ENCODE measurements at regions of chr22 and their contacts with region 1.

Region 1: DNA sequence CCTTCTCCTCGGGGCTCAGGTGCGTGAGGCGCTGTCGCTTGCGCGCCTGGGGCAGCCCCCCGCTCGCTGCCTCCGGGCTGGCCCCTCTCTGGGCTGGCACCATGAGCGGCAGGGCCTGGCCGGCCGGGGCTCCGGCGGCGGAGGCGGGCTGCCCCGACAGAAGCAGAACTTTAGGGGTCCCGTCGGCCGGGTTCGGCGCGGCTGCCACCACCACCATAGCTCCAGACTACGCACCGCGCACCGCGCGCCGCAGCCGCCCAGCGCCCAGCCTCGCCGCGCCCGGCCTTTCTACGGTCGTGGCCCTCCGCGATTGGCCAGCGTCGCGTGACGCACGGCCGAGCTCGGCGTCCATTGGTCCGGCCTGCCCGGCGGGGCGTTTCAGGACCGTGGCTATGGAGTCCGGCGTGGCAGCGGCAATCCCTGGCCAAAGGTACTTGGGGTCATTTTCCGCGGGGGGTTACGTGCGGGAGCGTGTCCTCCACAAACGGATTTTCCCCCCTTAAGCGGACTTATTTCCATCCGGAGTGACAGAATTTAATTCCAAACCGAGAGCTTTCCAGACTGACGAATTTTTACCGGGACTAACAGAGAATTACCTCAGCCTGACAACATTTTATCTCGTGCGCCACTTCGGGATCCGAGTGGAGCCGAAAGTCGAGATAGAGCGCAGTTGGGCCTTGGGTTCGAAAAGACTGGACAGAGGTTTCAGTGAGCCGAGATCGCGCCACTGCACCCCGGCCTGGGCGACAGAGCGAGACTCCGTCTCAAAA is at the start of gene XBP1:
- DNase-seq: peak; percentile 66 to 96
- H3K4me3 ChIP-seq: peak within 1 kb of the TSS; percentile 78 to 97 (median 90)
- H3K27ac ChIP-seq: peak within 1 kb of the TSS; percentile 89
- H3K4me1 ChIP-seq: peaks cover 0 to 3% (median under 1%) of the 10 kb centered on the region in 4 experiments; a peak in 1 of 7 replicates
- H3K27me3 ChIP-seq: no peaks in the 10 kb centered on the region
- CTCF ChIP-seq: no peak
- EP300 ChIP-seq: no peak
- POLR2A ChIP-seq: peak; percentile 96 to 97
- RAD21 ChIP-seq: no peak
- total RNA-seq, gene XBP1: 128 and 131 TPM in 2 replicates

Region 2: DNA sequence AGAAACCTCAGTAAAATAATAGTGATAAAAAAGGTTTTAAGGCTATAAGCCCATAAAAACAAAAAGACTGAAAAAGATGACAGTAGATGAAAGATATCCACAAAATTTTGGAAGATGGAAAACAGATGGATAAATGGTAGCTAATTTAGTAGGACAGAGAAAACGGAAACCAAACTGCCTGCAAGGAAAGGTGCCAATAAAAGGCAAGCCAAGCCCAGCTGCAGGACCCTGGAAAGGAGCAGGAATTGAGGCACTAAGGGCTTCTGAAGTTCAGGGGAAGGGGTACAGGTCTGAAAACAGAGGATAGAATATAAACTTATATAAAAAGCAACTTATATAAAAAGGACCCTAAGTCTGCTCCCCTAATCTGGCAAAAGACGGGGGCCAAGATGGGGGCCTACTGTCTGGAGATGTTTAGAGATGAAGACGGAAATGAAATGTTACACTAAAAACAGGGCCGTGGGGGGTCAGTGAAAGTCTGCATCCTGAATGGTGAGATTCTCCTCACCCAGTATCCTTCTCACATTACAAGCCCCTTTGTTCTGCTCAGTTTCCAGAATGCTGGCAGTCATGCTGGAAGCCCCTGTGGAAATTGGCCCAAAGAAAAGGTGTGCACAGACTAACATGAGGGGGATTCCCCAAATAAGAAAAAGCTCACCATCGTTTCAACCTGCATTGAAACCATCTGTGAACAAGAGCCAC is 612.2 kb before region 1 on chr22:
- CTCF ChIA-PET with region 1: no interaction called
- POLR2A ChIA-PET with region 1: no interaction called
- DNase-seq: peak in 1 of 2 experiments; percentile 53
- H3K4me3 ChIP-seq: no peak overlapping the region
- H3K27ac ChIP-seq: no peak overlapping the region
- H3K4me1 ChIP-seq: peaks cover 0 to 7% (median 3%) of the 10 kb centered on the region in 4 experiments; a peak in 4 of 7 replicates
- H3K27me3 ChIP-seq: no peaks in the 10 kb centered on the region
- CTCF ChIP-seq: no peak
- EP300 ChIP-seq: no peak
- POLR2A ChIP-seq: no peak
- RAD21 ChIP-seq: no peak

Region 3: DNA sequence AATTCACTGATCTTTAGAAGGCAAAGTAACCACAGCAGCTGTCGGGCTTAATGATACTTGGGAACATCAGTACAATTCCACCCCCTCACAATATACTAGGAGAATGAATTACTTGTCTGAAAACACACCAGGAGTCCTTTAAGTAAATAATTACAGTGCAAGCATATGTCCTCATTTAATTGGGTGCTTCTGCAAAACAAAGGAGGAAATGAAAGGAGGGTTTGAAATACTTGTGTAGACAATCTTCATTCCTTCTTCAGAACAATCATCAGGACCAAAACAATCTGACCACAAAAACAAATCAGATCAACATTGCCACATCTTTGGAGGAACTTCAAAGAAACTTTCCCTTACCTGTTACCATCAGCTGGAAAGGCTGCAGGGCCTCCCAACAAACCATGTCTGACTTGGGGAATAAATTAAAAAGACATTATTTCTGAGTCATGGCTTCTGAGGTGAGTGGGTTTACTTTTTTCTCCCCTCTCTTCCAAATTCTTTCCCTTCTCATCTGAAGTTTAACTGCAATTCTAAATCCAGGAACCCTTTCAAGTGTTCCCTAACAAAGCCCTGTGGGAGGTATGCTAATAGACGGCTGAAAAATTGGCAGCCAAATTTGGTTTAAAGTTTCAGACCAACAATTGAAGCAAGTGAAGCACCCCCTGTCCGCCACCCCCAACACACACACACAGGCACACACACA is 40.5 kb before region 1 on chr22:
- CTCF ChIA-PET with region 1: no interaction called
- POLR2A ChIA-PET with region 1: interaction called, 28 read pairs
- DNase-seq: peak in 1 of 2 experiments; percentile 41
- H3K4me3 ChIP-seq: peak overlapping the region in 2 of 4 experiments; percentile 8 to 46; a peak in 3 of 8 replicates
- H3K27ac ChIP-seq: peak overlapping the region; percentile 93
- H3K4me1 ChIP-seq: peaks cover 0 to 10% (median 5%) of the 10 kb centered on the region in 4 experiments; a peak in 5 of 7 replicates
- H3K27me3 ChIP-seq: no peaks in the 10 kb centered on the region
- CTCF ChIP-seq: no peak
- EP300 ChIP-seq: no peak
- POLR2A ChIP-seq: peak in 1 of 2 experiments; percentile 43; a peak in 1 of 3 replicates
- RAD21 ChIP-seq: no peak

Region 4: GRCh38 chr22:28772633-28773460 is 27.6 kb before region 1 on chr22 and contains the start of gene CCDC117:
- CTCF ChIA-PET with region 1: no interaction called
- POLR2A ChIA-PET with region 1: interaction called, 25 read pairs
- DNase-seq: peak; percentile 89 to 92
- H3K4me3 ChIP-seq: peak within 1 kb of the TSS; percentile 71 to 77 (median 73)
- H3K27ac ChIP-seq: peak within 1 kb of the TSS; percentile 91; the same call in 1 of the 2 replicates
- H3K4me1 ChIP-seq: peaks cover 0 to 3% (median 0%) of the 10 kb centered on the region in 4 experiments; a peak in 2 of 7 replicates
- H3K27me3 ChIP-seq: no peaks in the 10 kb centered on the region
- CTCF ChIP-seq: peak in 2 of 3 experiments; percentile 8 to 43; a peak in 1 of 4 replicates
- EP300 ChIP-seq: no peak
- POLR2A ChIP-seq: peak in 1 of 2 experiments; percentile 82; a peak in 2 of 3 replicates
- RAD21 ChIP-seq: 0 out of 4 replicates have a peak, but pooled peaks of 1 of the 2 experiments have one; percentile 2
- total RNA-seq, gene CCDC117: 40.4 and 43.1 TPM in 2 replicates

Region 5: GRCh38 chr22:28783786-28784671 is 16.5 kb before region 1 on chr22:
- CTCF ChIA-PET with region 1: interaction called, 5 read pairs
- POLR2A ChIA-PET with region 1: interaction called, 100 read pairs
- DNase-seq: no peak
- H3K4me3 ChIP-seq: no peak overlapping the region
- H3K27ac ChIP-seq: no peak overlapping the region
- H3K4me1 ChIP-seq: no peaks in the 10 kb centered on the region
- H3K27me3 ChIP-seq: no peaks in the 10 kb centered on the region
- CTCF ChIP-seq: no peak
- EP300 ChIP-seq: no peak
- POLR2A ChIP-seq: no peak
- RAD21 ChIP-seq: no peak

Region 6: DNA sequence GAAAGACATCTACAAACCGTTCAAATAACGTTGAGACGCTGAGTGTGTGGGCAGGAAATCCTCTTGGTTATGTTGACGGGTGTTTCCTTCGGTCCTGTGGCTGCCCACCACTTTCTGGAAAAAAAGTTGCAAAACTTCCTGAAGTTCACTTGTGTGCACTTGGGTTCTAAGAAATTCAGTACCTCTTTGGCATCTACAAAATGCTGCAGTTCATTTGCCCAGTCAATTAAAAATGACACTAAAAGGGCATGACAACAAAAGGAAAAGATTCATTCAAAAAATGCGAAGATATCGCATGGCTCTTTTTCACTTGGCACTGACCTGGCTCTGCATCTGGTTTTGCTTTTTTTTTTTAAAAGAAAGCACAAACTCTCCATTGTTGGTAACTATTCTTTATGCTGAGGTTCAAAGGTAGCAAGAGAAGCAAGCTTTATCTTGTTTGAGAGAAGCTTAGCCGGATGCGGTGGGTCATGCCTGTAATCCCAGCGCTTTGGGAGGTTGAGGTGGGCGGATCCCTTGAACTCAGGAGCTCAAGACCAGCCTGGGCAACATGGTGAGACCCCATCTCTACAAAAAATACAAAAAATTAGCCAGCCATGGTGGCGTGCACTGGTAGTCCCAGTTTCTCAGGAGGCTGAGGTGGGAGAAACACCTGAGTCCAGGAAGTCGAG is 10.5 kb after region 1 on chr22:
- CTCF ChIA-PET with region 1: interaction called, 3 read pairs
- POLR2A ChIA-PET with region 1: interaction called, 25 read pairs
- DNase-seq: no peak
- H3K4me3 ChIP-seq: no peak overlapping the region
- H3K27ac ChIP-seq: no peak overlapping the region
- H3K4me1 ChIP-seq: no peaks in the 10 kb centered on the region; a peak in 1 of 7 replicates
- H3K27me3 ChIP-seq: no peaks in the 10 kb centered on the region
- CTCF ChIP-seq: no peak
- EP300 ChIP-seq: no peak
- POLR2A ChIP-seq: no peak
- RAD21 ChIP-seq: no peak

Region 7: GRCh38 chr22:28829358-28830181 is 29.1 kb after region 1 on chr22:
- CTCF ChIA-PET with region 1: interaction called, 12 read pairs
- POLR2A ChIA-PET with region 1: interaction called, 27 read pairs
- DNase-seq: peak; percentile 25 to 87
- H3K4me3 ChIP-seq: no peak overlapping the region
- H3K27ac ChIP-seq: no peak overlapping the region
- H3K4me1 ChIP-seq: no peaks in the 10 kb centered on the region; a peak in 1 of 7 replicates
- H3K27me3 ChIP-seq: no peaks in the 10 kb centered on the region
- CTCF ChIP-seq: peak; percentile 89 to 97 (median 93)
- EP300 ChIP-seq: no peak
- POLR2A ChIP-seq: no peak
- RAD21 ChIP-seq: peak; percentile 98 to 99

Region 8: GRCh38 chr22:29022101-29022817 is 221.8 kb after region 1 on chr22:
- CTCF ChIA-PET with region 1: no interaction called
- POLR2A ChIA-PET with region 1: no interaction called
- DNase-seq: no peak
- H3K4me3 ChIP-seq: no peak overlapping the region
- H3K27ac ChIP-seq: no peak overlapping the region
- H3K4me1 ChIP-seq: peaks cover 0 to 8% (median 2%) of the 10 kb centered on the region in 4 experiments; a peak in 4 of 7 replicates
- H3K27me3 ChIP-seq: no peaks in the 10 kb centered on the region
- CTCF ChIP-seq: no peak
- EP300 ChIP-seq: no peak
- POLR2A ChIP-seq: no peak
- RAD21 ChIP-seq: no peak

Measured in H1 (cell line).